ENCODE measurements at regions of chr19 and their contacts with region 1.

Region 1: DNA sequence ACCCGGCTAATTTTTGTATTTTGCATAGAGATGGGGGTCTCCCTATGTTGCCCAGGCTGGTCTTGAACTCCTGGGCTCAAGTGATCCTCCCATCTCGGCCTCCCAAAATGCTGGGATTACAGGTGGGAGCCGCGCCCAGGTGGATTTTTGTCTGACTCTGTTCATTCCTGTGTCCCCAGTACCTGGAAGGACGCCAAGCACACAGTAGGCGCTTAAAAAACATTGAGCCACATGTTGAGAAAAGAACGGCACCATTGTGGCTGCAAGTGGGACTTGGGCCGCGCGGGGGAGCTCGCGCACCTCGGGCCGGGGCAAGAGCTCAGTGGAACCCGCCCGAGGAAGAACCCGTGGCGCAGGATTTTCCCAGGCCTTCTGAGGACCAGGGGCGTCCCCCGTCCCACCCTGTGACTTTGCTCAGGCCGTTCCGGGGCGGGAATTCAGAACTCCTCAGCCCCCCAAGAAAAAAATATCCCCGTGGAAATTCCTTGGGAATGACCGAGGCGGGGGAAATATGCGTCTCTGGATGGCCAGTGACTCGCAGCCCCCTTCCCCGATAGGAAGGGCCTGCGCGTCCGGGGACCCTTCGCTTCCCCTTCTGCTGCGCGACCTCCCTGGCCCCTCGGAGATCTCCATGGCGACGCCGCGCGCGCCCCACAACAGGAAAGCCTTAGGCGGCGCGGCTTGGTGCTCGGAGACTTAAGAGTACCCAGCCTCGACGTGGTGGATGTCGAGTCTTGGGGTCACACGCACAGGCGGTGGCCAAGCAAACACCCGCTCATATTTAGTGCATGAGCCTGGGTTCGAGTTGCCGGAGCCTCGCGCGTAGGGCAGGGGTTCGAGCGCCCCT is 1.4 kb upstream of the ICAM1 start:
- DNase-seq: peak in 1 of 2 experiments; percentile 63
- ATAC-seq: peak; percentile 86 to 92
- H3K4me3 ChIP-seq: peak overlapping the region; percentile 17; the same call in 1 of the 3 replicates
- H3K27ac ChIP-seq: peak overlapping the region; percentile 6 to 78; a peak in 4 of 6 replicates
- H3K4me1 ChIP-seq: peaks cover 16% of the 10 kb centered on the region
- CTCF ChIP-seq: peak; percentile 79
- EP300 ChIP-seq: no peak
- POLR2A ChIP-seq: no peak
- RAD21 ChIP-seq: peak; percentile 89 to 90

Region 2: DNA sequence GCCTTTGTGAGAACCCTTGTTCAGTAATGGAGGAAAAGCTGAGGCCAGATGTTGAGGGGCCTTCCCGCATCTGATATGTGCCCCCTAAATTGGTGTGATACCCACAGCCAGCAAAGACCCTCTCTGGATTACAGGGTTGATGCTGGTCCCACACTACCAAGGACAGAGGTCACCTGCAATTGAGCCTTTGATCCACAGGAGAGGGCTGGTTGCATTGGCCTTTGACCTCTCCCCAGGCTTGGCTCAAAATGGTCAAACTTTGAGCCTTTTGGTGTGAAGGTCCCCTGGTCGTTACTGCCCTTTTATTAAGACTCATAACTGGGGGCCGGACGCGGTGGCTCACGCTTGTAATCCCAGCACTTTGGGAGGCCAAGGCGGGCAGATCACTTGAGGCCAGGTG is 25.9 kb before region 1 on chr19:
- CTCF ChIA-PET with region 1: no interaction called
- POLR2A ChIA-PET with region 1: no interaction called
- DNase-seq: no peak
- ATAC-seq: no peak
- H3K4me3 ChIP-seq: no peak overlapping the region
- H3K27ac ChIP-seq: no peak overlapping the region
- H3K4me1 ChIP-seq: peaks cover 3% of the 10 kb centered on the region; the same call in 1 of the 3 replicates
- CTCF ChIP-seq: no peak
- EP300 ChIP-seq: no peak
- POLR2A ChIP-seq: no peak
- RAD21 ChIP-seq: no peak

Region 3: DNA sequence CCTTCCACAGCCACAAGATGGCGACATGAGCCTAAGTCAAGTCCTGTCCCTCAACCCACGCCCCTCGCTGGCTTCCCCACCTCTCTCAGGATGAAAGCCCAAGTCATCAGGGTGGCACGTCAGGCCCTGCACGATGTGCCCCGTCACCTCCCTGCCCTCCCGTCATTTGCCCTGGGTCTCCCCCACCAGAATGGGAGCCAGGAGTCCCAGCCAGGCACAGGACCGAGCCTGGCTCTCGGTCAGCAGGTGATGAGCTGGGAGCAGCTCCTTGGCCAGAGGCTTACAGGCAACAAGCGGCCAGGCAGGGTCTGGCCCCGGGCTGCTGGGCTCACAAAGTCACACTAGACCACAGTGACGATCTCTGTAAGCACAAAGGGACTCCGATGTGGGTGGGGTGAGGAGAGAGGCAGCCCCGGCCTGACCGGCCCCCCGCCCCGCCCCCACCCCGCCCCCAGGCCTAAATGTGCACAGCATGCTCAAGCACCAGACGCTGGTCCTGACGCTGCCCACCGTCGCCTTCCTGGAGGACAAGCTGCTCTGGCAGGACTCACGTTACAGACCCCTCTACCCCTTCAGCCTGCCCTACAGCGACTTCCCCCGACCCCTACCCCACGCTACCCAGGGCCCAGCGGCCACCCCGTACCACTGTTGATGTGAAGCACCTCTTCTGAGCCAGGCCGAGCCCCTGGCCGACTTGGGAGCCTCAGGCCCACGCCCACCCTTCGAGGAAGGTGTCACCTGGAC is 10.2 kb before region 1 on chr19:
- CTCF ChIA-PET with region 1: interaction called, 55 read pairs
- POLR2A ChIA-PET with region 1: no interaction called
- DNase-seq: peak in 1 of 2 experiments; percentile 86
- ATAC-seq: peak; percentile 67 to 82; a peak in 5 of 6 replicates
- H3K4me3 ChIP-seq: no peak overlapping the region
- H3K27ac ChIP-seq: 0 out of 6 replicates have a peak overlapping the region, but pooled peaks of 1 of the 2 experiments have one; percentile 21
- H3K4me1 ChIP-seq: peaks cover 15% of the 10 kb centered on the region; the same call in 2 of the 3 replicates
- CTCF ChIP-seq: peak; percentile 57
- EP300 ChIP-seq: no peak
- POLR2A ChIP-seq: no peak
- RAD21 ChIP-seq: peak; percentile 57 to 64

Region 4: DNA sequence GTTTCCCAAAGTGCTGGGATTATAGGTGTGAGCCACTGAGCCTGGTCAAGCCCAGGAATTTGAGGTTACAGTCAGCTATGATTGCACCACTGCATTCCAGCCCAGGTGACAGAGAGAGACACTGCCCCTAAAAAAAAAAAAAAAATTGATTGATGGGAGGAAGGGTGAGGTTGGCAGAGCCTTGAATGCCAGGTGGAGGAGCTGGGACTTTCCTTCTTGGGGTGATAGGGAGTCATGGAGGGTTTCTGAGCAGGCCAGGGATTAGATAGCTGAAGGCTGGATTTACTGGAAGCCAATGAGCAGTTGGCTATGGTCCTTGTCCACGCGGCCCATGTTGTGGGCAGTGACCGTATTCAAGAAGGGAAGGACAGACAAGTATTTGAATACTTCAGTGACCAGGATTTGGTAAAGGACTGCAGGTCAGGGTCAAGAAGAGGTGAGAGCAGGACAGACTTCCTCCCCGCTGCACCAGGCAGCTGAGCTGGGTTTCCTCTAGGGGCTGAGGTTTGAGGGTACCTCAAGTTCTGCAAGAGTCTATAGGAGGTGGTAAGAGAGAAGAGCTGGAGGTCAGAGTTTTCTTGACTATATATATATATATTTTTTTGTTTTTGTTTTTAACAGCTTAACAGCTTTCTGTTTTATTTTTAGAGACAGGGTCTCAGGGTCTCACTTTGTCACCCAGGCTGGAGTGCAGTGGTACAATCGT is 10.3 kb after region 1 on chr19:
- CTCF ChIA-PET with region 1: interaction called, 15 read pairs
- POLR2A ChIA-PET with region 1: interaction called, 3 read pairs
- DNase-seq: no peak
- ATAC-seq: no peak
- H3K4me3 ChIP-seq: no peak overlapping the region
- H3K27ac ChIP-seq: no peak overlapping the region
- H3K4me1 ChIP-seq: peaks cover 8% of the 10 kb centered on the region; the same call in 1 of the 3 replicates
- CTCF ChIP-seq: no peak
- EP300 ChIP-seq: no peak
- POLR2A ChIP-seq: no peak
- RAD21 ChIP-seq: no peak